ENCODE measurements at regions of chr1 and their contacts with region 1.

Region 1: GRCh38 chr1:231918239-231919015 is 291.8 kb downstream of the DISC1 start:
- DNase-seq: peak; percentile 53
- H3K4me3 Mint-ChIP-seq: no peak overlapping the region
- H3K27ac Mint-ChIP-seq: peak overlapping the region; percentile 18
- H3K4me1 Mint-ChIP-seq: peaks cover 70% of the 10 kb centered on the region
- H3K27me3 Mint-ChIP-seq: no peaks in the 10 kb centered on the region

Region 2: DNA sequence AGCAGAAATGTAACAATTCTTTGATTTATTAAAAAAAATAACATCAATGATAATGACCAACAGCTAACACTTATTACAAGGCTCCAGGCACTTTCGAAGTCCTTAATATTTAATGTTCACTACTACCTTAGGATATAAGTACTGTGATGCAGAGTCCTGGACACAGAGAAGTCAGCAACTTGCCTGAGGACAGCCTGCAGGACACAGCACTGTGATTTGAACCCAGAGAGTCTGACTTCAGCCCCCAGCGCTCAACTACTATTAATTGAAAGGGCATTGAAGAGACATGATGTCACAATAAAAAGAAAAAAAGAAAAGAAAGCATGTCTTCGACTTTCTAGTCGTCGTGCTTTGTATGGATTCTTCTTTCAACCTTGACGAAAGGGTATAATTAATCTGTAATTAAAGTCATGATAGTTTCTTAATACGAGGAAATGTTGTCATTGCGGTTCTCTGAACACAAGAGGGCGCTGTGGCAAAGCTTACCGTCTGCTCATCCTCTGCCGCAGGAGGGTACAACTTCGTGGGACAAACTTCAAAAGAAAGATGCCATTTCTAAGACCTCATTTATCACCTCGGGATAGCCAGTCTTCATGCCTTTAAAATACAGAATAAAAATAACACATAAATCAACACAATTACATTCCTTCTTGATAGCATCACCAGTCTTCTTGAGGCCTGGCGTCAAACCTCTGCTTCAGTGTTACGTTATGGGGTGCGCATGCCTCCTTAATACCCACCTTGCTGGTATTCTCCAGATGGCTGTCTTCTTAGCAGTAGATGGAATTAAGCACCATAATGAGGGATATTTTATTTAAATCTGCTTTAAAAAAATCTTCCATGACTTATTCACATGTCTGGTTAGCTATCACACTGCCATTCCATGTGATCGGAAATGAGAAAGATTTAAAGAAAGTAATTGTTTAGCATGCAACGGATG is 51.8 kb before region 1 on chr1:
- CTCF ChIA-PET with region 1: interaction called, 4 read pairs
- POLR2A ChIA-PET with region 1: interaction called, 3 read pairs
- intact Hi-C with region 1: loop called (anchors 5 kb)
- DNase-seq: peak; percentile 68
- H3K4me3 Mint-ChIP-seq: no peak overlapping the region
- H3K27ac Mint-ChIP-seq: no peak overlapping the region
- H3K4me1 Mint-ChIP-seq: peaks cover 15% of the 10 kb centered on the region
- H3K27me3 Mint-ChIP-seq: no peaks in the 10 kb centered on the region

Region 3: DNA sequence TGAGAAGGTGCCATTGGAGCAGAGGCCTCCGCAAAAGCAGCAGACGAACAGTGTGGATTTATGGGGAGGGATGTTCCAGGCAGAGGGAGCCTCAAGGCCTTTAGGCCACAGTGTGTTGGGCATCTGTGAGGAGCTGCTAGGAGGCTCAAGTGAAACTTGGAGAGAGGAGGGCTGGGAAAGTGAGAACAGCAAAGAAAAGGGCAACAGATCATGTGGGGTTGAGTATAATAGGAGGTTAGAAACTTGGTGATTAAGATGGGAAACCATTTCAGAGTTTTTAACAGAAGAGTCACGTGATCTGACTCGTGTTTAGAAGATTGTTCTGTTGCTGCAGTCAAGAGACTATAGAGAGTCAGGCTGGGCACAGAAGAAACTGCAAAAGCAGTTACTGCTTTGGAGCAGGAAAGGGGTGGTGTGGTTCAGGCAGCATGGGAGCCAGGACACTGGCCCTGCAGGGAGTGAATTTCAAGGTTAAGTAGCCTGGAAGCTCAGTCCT is 14.8 kb before region 1 on chr1:
- CTCF ChIA-PET with region 1: no interaction called
- POLR2A ChIA-PET with region 1: no interaction called
- intact Hi-C with region 1: no loop called
- DNase-seq: no peak
- H3K4me3 Mint-ChIP-seq: no peak overlapping the region
- H3K27ac Mint-ChIP-seq: no peak overlapping the region
- H3K4me1 Mint-ChIP-seq: peaks cover 3% of the 10 kb centered on the region
- H3K27me3 Mint-ChIP-seq: no peaks in the 10 kb centered on the region

Region 4: DNA sequence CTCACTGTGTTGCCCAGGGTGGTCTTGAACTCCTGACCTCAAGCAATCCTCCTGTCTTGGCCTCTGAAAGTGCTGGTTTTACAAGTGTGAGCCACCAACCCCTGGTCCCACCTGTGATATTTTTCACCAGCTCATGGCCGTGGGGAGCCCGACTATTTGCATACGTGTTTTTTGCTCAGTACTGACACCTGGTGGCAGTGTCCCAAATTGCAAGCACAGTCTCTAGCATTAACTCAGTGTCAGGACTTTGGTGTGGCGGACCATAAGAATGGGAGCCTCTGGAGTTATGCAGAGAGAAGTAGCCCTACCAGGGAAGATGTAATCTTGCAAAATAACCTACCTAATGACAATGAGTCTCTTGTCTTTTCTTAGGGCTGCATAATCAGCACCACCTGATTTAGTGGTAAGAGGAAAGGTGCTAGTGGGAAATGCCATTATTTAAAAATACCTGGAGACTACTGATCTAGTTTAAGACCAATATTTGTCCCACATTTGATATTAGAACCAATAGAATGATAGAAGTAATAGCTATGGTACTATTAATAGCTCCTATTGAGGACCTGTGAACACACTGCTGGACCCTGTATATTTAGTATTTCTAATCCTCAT is 13.5 kb after region 1 on chr1:
- CTCF ChIA-PET with region 1: interaction called, 18 read pairs
- POLR2A ChIA-PET with region 1: interaction called, 3 read pairs
- intact Hi-C with region 1: no loop called
- DNase-seq: peak; percentile 60
- H3K4me3 Mint-ChIP-seq: no peak overlapping the region
- H3K27ac Mint-ChIP-seq: no peak overlapping the region
- H3K4me1 Mint-ChIP-seq: peaks cover 10% of the 10 kb centered on the region
- H3K27me3 Mint-ChIP-seq: no peaks in the 10 kb centered on the region